Heart right ventricle (tissue), 16 donors: ENCODE measurements at regions of chr5 and their contacts with region 1.

Region 1: DNA sequence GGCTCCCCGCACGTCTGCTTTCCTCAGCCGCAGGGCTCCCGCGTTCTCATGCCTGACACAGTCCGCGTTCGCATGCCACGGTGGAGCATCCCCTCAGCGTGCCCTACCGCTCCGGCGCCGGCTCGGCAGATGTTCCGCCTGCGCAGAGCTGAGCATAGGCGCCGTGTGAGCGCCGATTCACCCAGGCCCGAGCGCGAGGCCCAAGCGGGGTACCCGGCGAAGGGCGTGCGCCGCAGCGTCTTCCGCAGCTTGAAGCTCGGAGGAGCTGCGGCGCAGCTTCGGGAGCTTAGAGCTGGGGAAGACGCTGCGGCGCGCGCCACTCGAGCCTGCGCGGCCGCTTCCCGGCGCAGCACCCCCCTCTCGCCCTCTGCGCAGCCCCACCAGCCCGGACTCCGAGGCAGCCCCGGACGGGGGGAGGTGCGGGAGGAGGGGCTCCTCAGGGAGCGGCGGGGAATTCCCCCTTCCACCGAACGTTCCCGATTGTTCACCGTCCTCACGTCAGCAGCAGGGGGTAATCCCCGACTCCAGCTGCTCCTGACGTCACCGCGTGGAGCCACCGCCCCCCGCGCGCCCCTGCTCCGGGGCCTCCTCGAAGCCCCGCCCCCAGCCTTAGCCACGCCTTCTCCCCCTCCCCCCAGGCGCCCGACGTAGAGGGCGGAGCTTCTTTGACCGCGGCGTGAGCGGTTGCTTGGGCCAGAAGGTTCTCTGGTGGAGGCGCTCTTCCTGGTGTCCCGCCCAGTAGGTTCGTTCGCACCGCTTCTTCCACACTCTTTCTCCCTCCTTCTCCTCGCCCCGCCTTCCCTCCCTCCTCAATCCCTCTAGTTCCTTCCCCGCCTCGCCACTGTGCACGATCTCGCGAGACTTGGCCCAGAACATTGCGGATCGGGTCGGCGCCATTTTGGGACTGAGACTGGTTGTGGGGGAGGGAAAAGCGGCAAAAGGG is at the start of gene GPBP1:
- DNase-seq: peak; percentile 98 to 100
- ATAC-seq: peak; percentile 92 to 97 (median 94)
- H3K4me3 ChIP-seq: peak within 1 kb of the TSS; percentile 61 to 98 (median 82)
- H3K27ac ChIP-seq: peak within 1 kb of the TSS; percentile 92 to 100 (median 98)
- H3K4me1 ChIP-seq: peaks cover 6 to 46% (median 41%) of the 10 kb centered on the region in 9 donors
- H3K27me3 ChIP-seq: no peaks in the 10 kb centered on the region
- CTCF ChIP-seq: peak in 3 of 9 donors; percentile 6 to 8 (median 8)
- total RNA-seq, gene GPBP1: 48.1 to 69.3 (median 51.6) TPM

Region 2: DNA sequence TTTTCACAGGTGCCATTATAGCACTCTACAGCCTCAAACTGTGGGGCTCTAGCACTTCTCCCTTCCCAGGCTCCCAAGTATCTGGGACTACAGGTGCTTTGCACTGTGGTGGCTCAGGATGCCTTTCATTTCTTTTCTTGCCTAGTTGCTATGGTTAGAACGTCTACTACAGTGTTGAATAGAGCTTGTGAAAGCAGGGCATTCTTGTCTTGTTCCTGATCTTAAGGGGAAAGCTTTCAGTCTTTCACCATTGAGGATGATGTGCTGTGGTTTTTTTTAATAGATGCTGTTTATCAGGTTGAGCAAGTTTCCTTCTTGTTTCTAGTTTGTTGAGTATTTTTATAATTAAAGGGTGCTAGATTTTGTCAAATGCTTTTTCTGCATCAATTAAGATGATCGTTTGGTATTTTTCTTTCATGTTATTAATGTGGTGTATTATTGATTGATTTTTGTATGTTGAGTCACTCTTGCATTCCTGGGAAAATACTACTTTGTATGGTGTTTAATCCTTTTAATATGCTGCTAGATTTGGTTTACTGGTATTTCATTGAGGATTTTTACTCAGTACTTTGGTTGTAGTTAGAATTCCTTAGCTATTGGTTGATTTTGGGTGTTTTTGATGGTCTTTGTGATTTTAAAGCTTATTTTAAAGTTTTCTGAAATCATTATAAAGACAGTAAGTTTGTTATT is 36.0 kb after region 1 on chr5:
- intact Hi-C with region 1: loop called in 4 of 10 experiments (anchors 5 kb)
- DNase-seq: no peak
- ATAC-seq: no peak
- H3K4me3 ChIP-seq: no peak overlapping the region
- H3K27ac ChIP-seq: peak overlapping the region in 3 of 10 donors; percentile 72 to 82 (median 76)
- H3K4me1 ChIP-seq: peaks cover 4 to 66% (median 54%) of the 10 kb centered on the region in 9 donors
- H3K27me3 ChIP-seq: no peaks in the 10 kb centered on the region
- CTCF ChIP-seq: no peak